Endothelial cell of umbilical vein (primary cell): ENCODE measurements at regions of chr13 and their contacts with region 1.

Region 1: DNA sequence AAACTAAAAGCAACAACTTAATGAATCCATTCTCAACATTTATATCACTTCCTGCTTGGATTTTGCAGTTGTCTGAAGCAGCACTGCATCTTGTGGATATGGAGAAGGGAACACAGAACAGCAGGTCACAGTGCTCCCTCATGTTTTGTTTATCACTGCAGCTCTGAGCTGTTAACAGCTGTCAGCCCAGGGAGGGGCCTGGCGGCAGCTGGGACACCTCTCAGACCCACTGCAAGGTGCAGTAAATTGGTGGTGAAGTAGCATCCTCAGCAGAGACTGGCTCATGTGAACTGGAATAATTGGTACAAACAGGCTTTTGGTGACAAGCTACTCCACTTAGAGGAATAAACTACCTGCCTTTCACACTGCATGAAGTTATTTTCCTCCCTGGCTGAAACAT is 170.4 kb downstream of the LIG4 start:
- DNase-seq: no peak
- H3K4me3 ChIP-seq: no peak overlapping the region
- H3K27ac ChIP-seq: no peak overlapping the region
- H3K4me1 ChIP-seq: no peaks in the 10 kb centered on the region
- H3K27me3 ChIP-seq: no peaks in the 10 kb centered on the region
- CTCF ChIP-seq: no peak
- POLR2A ChIP-seq: no peak

Region 2: DNA sequence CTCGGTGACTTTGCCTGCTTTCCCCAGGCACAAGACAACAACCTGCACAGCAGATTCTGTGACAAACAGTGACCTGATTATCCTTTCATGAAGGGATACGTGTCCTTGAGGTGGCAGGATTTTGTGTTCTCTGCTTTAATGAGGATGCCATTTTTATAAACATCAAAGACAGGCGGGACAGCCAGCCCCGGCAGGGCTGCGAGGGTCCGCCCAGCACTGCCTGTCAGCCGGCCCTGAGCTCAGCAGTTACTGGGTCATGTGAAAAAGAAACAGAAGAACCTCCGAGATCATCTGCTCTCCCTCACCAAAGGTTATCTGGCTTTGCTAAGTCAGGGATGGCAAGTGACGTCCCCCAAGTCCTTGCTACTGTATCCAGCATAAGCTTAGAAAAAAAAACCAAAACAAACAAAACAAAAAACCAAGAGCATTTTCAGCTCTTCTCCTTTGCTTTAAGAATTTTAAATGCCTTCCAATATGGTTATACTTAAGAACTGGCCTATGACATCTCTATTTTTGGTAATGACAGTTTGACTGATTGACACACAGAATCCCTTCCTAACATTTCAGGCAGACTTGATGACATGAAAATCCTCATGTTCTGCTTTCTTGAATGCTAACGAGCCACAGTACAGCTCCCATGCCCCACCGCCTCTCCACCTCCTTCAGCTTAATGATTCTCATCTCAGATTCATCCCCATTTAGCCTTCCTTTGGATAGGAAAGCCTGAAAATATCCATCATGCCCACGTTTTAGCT is 810.5 kb before region 1 on chr13:
- CTCF ChIA-PET with region 1: no interaction called
- POLR2A ChIA-PET with region 1: no interaction called
- dilution Hi-C with region 1: no loop called
- intact Hi-C with region 1: loop called (anchors 5 kb)
- DNase-seq: no peak
- H3K4me3 ChIP-seq: no peak overlapping the region
- H3K27ac ChIP-seq: no peak overlapping the region
- H3K4me1 ChIP-seq: no peaks in the 10 kb centered on the region
- H3K27me3 ChIP-seq: no peaks in the 10 kb centered on the region
- CTCF ChIP-seq: no peak
- POLR2A ChIP-seq: no peak

Region 3: GRCh38 chr13:108026680-108027410 is 18.1 kb before region 1 on chr13:
- CTCF ChIA-PET with region 1: no interaction called
- POLR2A ChIA-PET with region 1: no interaction called
- dilution Hi-C with region 1: no loop called
- intact Hi-C with region 1: no loop called
- DNase-seq: no peak
- H3K4me3 ChIP-seq: no peak overlapping the region
- H3K27ac ChIP-seq: no peak overlapping the region
- H3K4me1 ChIP-seq: no peaks in the 10 kb centered on the region
- H3K27me3 ChIP-seq: no peaks in the 10 kb centered on the region
- CTCF ChIP-seq: no peak
- POLR2A ChIP-seq: no peak